T-cell (primary cell): ENCODE measurements at regions of chr17 and their contacts with region 1.

Region 1: DNA sequence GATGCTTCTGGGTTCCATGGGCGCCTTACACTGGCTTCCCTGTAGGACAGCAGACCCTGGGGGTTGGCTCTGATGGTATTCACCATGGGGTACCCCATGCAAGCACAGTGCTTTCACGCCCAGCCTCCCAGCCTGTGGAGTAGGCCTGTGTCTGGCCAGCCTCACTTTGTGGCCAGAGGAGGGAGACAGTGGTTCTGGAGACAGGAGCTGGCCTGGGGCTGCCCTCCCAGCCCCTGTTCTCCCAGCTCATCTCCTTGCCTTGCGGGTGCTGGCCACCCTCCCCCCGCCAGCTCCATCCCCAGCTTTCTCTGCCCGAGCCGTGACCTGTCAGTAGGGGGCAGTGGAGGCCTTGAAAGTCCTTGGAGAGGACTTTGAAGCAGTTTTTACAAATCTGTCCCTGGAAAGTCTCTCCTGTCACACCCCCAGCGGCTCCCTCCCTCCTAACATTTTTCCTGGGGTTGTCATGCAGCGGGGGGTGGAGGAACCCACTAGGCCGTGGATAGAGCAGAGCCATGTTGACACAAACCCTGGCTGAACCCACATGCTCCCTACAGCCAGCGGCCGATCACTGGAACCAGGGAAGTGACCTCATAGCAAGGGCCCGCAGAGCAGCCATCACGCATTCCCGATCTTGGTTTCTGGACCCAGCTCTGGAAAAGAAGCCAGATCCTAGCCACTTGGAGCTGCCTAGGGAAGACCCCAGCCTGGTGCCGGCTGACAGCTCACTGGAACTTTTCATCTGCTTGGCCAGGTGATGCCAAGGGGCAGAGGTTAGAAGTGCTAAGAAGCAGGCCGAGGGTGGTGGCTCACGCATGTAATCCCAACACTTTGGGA is 289.4 kb downstream of the SEC14L1 start:
- DNase-seq: peak; percentile 56 to 89 (median 80)
- ATAC-seq: peak; percentile 18 to 52 (median 38)
- H3K4me3 ChIP-seq: no peak overlapping the region
- H3K4me3 Mint-ChIP-seq: peak overlapping the region in 2 of 3 donors; percentile 37 to 91
- H3K27ac ChIP-seq: no peak overlapping the region
- H3K27ac Mint-ChIP-seq: peak overlapping the region; percentile 88 to 91
- H3K4me1 ChIP-seq: peaks cover 53 to 100% of the 10 kb centered on the region in 2 experiments
- H3K4me1 Mint-ChIP-seq: peaks cover 89 to 95% (median 92%) of the 10 kb centered on the region in 3 donors
- H3K27me3 ChIP-seq: no peaks in the 10 kb centered on the region
- H3K27me3 Mint-ChIP-seq: no peaks in the 10 kb centered on the region

Region 2: DNA sequence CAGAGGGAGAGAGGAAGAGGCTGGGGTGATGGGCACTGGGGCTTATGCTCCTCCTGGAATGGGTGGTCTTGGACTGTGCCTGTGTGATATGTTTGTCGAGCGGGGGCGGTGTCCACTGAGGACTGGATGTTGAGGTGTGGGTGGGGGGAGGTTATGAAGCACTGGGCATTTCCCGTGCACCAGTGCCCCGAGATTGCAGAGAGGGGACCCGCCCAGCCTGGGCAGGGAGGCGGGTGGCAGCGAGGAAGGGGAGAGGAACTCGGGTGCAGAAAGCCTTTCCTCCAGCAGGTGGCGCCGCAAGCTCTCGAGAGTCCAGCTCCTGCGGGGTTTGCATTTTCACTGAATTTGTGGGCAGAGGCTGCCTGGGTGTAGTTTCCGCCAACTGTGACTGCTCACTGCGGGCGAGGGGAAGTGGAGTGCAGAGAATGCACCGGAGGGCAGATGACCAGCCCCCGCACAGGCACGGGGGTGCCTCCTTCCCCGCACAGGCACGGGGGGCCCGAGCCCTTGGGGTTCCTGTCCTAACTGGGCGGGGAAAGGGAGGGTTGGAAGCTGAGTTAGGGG is 98.8 kb before region 1 on chr17:
- CTCF ChIA-PET with region 1: interaction called in 1 of 2 experiments, 11 read pairs
- POLR2A ChIA-PET with region 1: no interaction called
- DNase-seq: peak; percentile 83 to 98 (median 94)
- ATAC-seq: peak; percentile 83 to 91 (median 90)
- H3K4me3 ChIP-seq: peak overlapping the region; percentile 23 to 32
- H3K4me3 Mint-ChIP-seq: peak overlapping the region; percentile 74 to 79 (median 78)
- H3K27ac ChIP-seq: peak overlapping the region; percentile 63
- H3K27ac Mint-ChIP-seq: peak overlapping the region; percentile 92 to 93
- H3K4me1 ChIP-seq: peaks cover 26 to 50% of the 10 kb centered on the region in 2 experiments
- H3K4me1 Mint-ChIP-seq: peaks cover 40 to 56% (median 54%) of the 10 kb centered on the region in 3 donors
- H3K27me3 ChIP-seq: no peaks in the 10 kb centered on the region
- H3K27me3 Mint-ChIP-seq: no peaks in the 10 kb centered on the region

Region 3: GRCh38 chr17:77441130-77441920 is 11.2 kb after region 1 on chr17:
- CTCF ChIA-PET with region 1: interaction called, 4 to 11 read pairs
- POLR2A ChIA-PET with region 1: interaction called, 3 to 4 read pairs
- DNase-seq: peak in 34 of 35 experiments; percentile 58 to 93 (median 76)
- ATAC-seq: peak; percentile 49 to 65 (median 50)
- H3K4me3 ChIP-seq: peak overlapping the region; percentile 25 to 53
- H3K4me3 Mint-ChIP-seq: peak overlapping the region; percentile 75 to 91 (median 77)
- H3K27ac ChIP-seq: peak overlapping the region; percentile 95
- H3K27ac Mint-ChIP-seq: peak overlapping the region; percentile 99 to 100
- H3K4me1 ChIP-seq: peaks cover 80 to 100% of the 10 kb centered on the region in 2 experiments
- H3K4me1 Mint-ChIP-seq: peaks cover 98 to 100% (median 98%) of the 10 kb centered on the region in 3 donors
- H3K27me3 ChIP-seq: no peaks in the 10 kb centered on the region
- H3K27me3 Mint-ChIP-seq: no peaks in the 10 kb centered on the region

Region 4: GRCh38 chr17:77494664-77495435 is 64.7 kb after region 1 on chr17:
- CTCF ChIA-PET with region 1: interaction called, 7 to 19 read pairs
- POLR2A ChIA-PET with region 1: no interaction called
- DNase-seq: peak in 34 of 35 experiments; percentile 42 to 87 (median 64)
- ATAC-seq: peak; percentile 64 to 74 (median 70)
- H3K4me3 ChIP-seq: no peak overlapping the region
- H3K4me3 Mint-ChIP-seq: no peak overlapping the region
- H3K27ac ChIP-seq: peak overlapping the region; percentile 37
- H3K27ac Mint-ChIP-seq: peak overlapping the region; percentile 89
- H3K4me1 ChIP-seq: peaks cover 0 to 63% of the 10 kb centered on the region in 2 experiments
- H3K4me1 Mint-ChIP-seq: peaks cover 20 to 30% (median 26%) of the 10 kb centered on the region in 3 donors
- H3K27me3 ChIP-seq: no peaks in the 10 kb centered on the region
- H3K27me3 Mint-ChIP-seq: no peaks in the 10 kb centered on the region